Esophagus squamous epithelium (tissue), 5 donors: ENCODE measurements at regions of chr10 and their contacts with region 1.

Region 1: DNA sequence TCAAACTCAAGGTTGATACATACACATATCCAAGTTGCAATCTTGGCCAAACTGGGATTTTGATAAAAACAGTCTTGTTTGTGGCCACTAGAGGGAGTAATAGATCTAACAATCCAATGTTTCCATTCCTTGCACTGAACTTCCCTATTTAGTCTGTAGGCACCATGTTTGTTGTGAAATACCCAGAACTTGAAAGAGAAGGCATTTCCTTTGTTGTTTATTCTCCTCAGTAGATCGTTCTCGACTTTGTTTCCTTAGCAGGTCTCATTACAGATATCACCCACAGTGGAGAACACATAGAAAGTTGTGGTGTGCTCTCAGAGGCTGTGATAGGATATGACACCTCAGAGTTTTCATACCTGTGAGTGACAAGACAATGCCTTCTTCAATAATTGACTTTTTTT is 70.3 kb upstream of the MXI1 start:
- DNase-seq: no peak
- H3K4me3 ChIP-seq: no peak overlapping the region
- H3K27ac ChIP-seq: peak overlapping the region in 3 of 4 donors; percentile 47 to 63 (median 59)
- H3K4me1 ChIP-seq: peaks cover 0 to 12% (median 0%) of the 10 kb centered on the region in 3 donors
- H3K27me3 ChIP-seq: no peaks in the 10 kb centered on the region
- CTCF ChIP-seq: peak; percentile 63 to 91 (median 82)
- POLR2A ChIP-seq: no peak

Region 2: DNA sequence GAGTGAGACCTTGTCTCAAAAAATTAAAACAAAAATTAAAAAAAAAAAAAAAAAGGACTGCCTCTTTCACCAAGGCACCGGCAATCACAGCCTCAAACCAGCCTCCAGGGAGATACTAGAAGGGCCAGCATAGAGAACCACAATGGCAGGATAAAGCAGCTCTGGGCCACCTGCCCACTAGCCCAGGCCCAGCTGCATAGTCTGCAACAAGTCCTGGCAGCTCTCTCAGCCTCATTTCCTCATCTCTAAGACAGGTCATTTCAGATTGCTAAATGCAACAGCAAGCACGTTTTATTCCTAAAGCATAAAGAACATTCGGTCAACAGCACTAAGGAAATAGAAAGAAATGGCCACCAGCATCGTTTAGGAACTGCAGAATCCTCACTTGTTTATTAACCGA is 242.6 kb before region 1 on chr10:
- intact Hi-C with region 1: loop called (anchors 5 kb)
- DNase-seq: no peak
- H3K4me3 ChIP-seq: no peak overlapping the region
- H3K27ac ChIP-seq: peak overlapping the region; percentile 71 to 84 (median 76)
- H3K4me1 ChIP-seq: peaks cover 36 to 97% (median 71%) of the 10 kb centered on the region in 3 donors
- H3K27me3 ChIP-seq: no peaks in the 10 kb centered on the region
- CTCF ChIP-seq: no peak
- POLR2A ChIP-seq: no peak

Region 3: DNA sequence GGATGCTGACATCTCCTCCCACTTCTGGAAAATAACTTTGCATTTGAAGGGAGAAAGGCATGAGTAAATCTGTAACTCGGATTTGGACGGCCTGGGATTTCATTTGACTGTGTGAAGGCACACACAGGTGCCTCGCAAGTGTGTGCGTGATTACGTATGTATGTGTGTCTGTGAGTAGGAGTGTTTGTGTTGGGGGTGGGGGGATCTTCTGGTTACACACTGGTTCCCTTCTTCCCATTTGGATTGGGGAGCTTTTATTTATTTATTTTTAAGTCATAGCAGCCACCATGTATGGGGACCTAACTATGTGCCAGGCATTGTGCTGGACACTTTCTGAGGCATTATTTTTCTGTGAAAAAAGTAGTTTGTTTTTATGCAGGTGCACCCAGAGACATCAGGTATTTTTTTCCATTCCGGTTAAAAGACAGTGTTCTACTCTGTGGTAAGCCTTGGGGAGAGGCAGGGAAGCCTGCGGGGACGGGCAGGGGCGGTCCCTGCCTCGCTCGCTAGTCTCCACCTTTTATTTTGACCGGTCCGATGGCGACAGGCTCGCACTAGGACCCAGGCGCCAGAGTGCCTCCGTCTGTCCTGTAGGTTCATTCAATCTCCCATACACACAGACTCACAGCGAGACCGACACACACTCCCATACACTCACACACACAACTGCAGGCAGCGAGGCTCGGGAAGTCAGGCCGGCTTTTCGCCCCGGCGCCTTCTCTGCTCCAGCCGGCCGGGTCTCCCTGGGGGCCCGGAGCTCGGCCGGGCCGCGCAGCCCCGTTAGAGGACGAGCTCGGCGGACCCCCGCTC is 70.1 kb after region 1 on chr10 and contains the start of gene MXI1:
- intact Hi-C with region 1: loop called (anchors 10 kb)
- DNase-seq: peak; percentile 8
- H3K4me3 ChIP-seq: peak within 1 kb of the TSS; percentile 67 to 78 (median 74)
- H3K27ac ChIP-seq: peak within 1 kb of the TSS; percentile 94 to 97 (median 95)
- H3K4me1 ChIP-seq: peaks cover under 1 to 26% (median 13%) of the 10 kb centered on the region in 3 donors
- H3K27me3 ChIP-seq: no peaks in the 10 kb centered on the region
- CTCF ChIP-seq: no peak
- POLR2A ChIP-seq: peak in 1 of 4 donors; percentile 64
- total RNA-seq, gene MXI1: 16.0 to 53.2 (median 35.0) TPM

Region 4: GRCh38 chr10:110252151-110252550 is 115.0 kb after region 1 on chr10:
- intact Hi-C with region 1: no loop called
- DNase-seq: no peak
- H3K4me3 ChIP-seq: no peak overlapping the region
- H3K27ac ChIP-seq: no peak overlapping the region
- H3K4me1 ChIP-seq: no peaks in the 10 kb centered on the region
- H3K27me3 ChIP-seq: no peaks in the 10 kb centered on the region
- CTCF ChIP-seq: no peak
- POLR2A ChIP-seq: no peak

Region 5: DNA sequence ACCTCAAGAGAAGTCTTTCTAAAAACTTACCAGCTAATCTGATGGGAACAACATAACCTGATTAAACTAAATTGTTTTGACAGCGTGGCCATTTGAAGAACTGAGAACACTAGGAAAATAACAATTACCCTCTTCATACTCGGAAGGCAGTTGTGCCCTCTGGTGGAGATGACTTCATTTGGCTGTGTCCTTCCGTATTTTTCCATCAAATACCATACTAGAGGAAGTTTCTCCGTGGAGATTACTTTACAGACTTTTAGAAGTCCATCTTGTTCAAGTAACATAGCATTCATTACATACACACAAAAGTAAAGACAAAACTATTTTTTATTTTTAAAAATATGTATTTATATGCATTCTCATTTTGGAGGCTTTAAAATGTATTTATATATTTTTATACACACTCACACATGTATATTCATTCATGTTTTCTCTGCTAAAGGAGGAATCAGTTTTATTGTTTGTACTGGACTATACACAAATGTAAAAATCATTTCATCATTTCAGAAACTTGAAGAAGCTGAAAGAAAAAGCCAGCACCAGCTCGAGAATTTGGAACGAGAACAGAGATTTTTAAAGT is 142.4 kb after region 1 on chr10:
- intact Hi-C with region 1: loop called (anchors 5 kb)
- DNase-seq: no peak
- H3K4me3 ChIP-seq: peak overlapping the region in 1 of 4 donors; percentile 14
- H3K27ac ChIP-seq: no peak overlapping the region
- H3K4me1 ChIP-seq: peaks cover 0 to 18% (median 5%) of the 10 kb centered on the region in 3 donors
- H3K27me3 ChIP-seq: no peaks in the 10 kb centered on the region
- CTCF ChIP-seq: peak; percentile 25 to 85 (median 76)
- POLR2A ChIP-seq: no peak

Region 6: GRCh38 chr10:110304780-110305421 is 167.8 kb after region 1 on chr10 and contains the start of gene SMNDC1:
- intact Hi-C with region 1: no loop called
- DNase-seq: peak; percentile 81
- H3K4me3 ChIP-seq: peak within 1 kb of the TSS; percentile 83 to 99 (median 91)
- H3K27ac ChIP-seq: peak within 1 kb of the TSS; percentile 96 to 98 (median 98)
- H3K4me1 ChIP-seq: peaks cover 13 to 52% (median 33%) of the 10 kb centered on the region in 3 donors
- H3K27me3 ChIP-seq: no peaks in the 10 kb centered on the region
- CTCF ChIP-seq: peak in 1 of 6 experiments; percentile 22
- POLR2A ChIP-seq: peak in 2 of 4 donors; percentile 40 to 79
- total RNA-seq, gene SMNDC1: 9.5 to 13.9 (median 10.9) TPM